CD4-positive, alpha-beta memory T cell (primary cell): ENCODE measurements at regions of chr11 and their contacts with region 1.

Region 1: DNA sequence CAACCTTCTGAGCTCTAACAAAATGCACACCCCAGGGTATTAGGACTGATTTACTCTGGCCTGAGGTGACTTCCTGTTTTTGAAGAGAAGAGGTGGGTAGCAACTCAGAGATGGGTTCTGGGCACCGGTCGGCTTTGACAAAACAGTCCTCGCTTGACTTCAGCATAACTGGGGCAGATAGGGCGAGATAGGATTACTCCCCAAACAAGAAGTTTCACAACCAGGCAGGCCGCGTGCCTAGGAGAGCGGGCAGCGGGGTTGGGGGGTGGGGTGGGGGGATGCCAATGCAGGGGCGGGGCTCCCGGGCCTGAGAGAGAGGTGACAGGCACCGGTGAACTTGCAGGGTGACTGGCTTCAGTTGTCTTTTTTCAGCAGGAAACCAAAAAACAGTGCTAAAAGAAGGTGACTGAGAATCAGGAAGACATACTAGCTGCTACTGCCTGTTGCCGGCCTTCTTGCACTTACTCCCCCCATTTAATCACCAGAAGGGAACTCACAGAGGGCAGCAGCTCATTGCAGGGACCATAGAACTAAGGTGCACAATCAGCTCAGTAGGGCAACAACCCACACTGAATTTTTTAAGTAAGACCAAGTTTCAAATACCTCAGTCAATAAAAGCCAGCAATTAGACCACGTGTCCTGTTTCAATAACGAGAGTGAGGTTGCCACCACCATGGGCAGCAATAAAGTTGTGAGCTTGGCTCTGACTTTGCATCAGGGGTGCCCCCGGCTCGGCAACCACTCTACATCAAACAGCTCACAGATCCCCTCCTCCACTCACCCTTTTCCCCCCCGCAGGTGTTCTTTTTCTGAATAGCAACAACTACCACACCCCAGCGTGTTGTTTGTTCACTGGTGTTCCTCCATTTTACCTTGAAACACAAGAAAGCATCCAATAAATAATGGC is 37.2 kb upstream of the ETS1 start:
- DNase-seq: peak; percentile 69 to 83 (median 77)
- H3K4me3 ChIP-seq: peak overlapping the region in 1 of 2 donors; percentile 28
- H3K4me3 Mint-ChIP-seq: peak overlapping the region; percentile 67 to 91 (median 80)
- H3K27ac ChIP-seq: peak overlapping the region; percentile 67
- H3K27ac Mint-ChIP-seq: peak overlapping the region; percentile 96 to 98 (median 97)
- H3K4me1 ChIP-seq: peaks cover 85% of the 10 kb centered on the region
- H3K4me1 Mint-ChIP-seq: peaks cover 76 to 100% (median 89%) of the 10 kb centered on the region in 4 donors
- H3K27me3 ChIP-seq: no peaks in the 10 kb centered on the region
- H3K27me3 Mint-ChIP-seq: no peaks in the 10 kb centered on the region

Region 2: DNA sequence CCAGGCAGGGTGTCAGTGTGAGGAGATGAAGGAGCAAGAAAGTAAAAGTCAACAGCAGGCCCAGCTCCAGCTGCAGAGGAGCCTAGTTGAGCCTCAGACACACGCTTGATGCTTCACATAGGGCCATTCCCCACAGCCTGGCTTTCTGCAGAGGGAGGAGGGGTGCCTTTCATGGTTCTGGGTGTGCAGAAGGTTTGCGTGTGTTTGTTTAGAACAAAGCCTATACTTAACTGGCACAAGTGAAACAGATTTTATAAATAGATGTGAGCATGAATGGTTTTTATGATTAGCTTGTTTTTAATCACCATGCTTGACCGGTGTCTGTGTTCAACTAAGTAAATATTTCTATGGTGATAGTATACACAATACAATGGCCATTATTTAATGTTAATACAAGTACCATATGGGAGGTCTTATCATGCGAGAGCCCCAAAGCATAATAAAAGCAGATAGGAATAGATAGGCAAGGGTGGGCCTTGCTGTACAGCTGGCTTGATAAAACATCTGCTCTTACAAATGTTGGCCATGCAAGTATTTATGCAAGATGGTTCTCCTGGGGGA is 327.4 kb before region 1 on chr11:
- CTCF ChIA-PET with region 1: interaction called, 173 read pairs
- POLR2A ChIA-PET with region 1: interaction called, 49 read pairs
- intact Hi-C with region 1: no loop called
- DNase-seq: no peak
- H3K4me3 ChIP-seq: no peak overlapping the region
- H3K4me3 Mint-ChIP-seq: peak overlapping the region in 6 of 8 donors; percentile 43 to 93 (median 58)
- H3K27ac ChIP-seq: peak overlapping the region; percentile 1
- H3K27ac Mint-ChIP-seq: peak overlapping the region; percentile 82 to 100 (median 98)
- H3K4me1 ChIP-seq: peaks cover 100% of the 10 kb centered on the region
- H3K4me1 Mint-ChIP-seq: peaks cover 76 to 98% (median 86%) of the 10 kb centered on the region in 4 donors
- H3K27me3 ChIP-seq: no peaks in the 10 kb centered on the region
- H3K27me3 Mint-ChIP-seq: no peaks in the 10 kb centered on the region

Region 3: GRCh38 chr11:128458321-128458720 is 166.2 kb before region 1 on chr11:
- CTCF ChIA-PET with region 1: interaction called, 31 read pairs
- POLR2A ChIA-PET with region 1: interaction called, 18 read pairs
- intact Hi-C with region 1: no loop called
- DNase-seq: no peak
- H3K4me3 ChIP-seq: no peak overlapping the region
- H3K4me3 Mint-ChIP-seq: no peak overlapping the region
- H3K27ac ChIP-seq: no peak overlapping the region
- H3K27ac Mint-ChIP-seq: peak overlapping the region; percentile 5 to 57 (median 23)
- H3K4me1 ChIP-seq: peaks cover 74% of the 10 kb centered on the region
- H3K4me1 Mint-ChIP-seq: peaks cover 57 to 94% (median 76%) of the 10 kb centered on the region in 4 donors
- H3K27me3 ChIP-seq: no peaks in the 10 kb centered on the region
- H3K27me3 Mint-ChIP-seq: no peaks in the 10 kb centered on the region

Region 4: GRCh38 chr11:128472128-128473089 is 152.1 kb before region 1 on chr11:
- CTCF ChIA-PET with region 1: interaction called, 21 read pairs
- POLR2A ChIA-PET with region 1: interaction called, 62 read pairs
- intact Hi-C with region 1: no loop called
- DNase-seq: peak in 4 of 5 donors; percentile 51 to 82 (median 57)
- H3K4me3 ChIP-seq: peak overlapping the region; percentile 5 to 27
- H3K4me3 Mint-ChIP-seq: peak overlapping the region; percentile 70 to 93 (median 84)
- H3K27ac ChIP-seq: peak overlapping the region; percentile 94
- H3K27ac Mint-ChIP-seq: peak overlapping the region; percentile 98 to 99 (median 99)
- H3K4me1 ChIP-seq: peaks cover 100% of the 10 kb centered on the region
- H3K4me1 Mint-ChIP-seq: peaks cover 85 to 98% (median 92%) of the 10 kb centered on the region in 4 donors
- H3K27me3 ChIP-seq: no peaks in the 10 kb centered on the region
- H3K27me3 Mint-ChIP-seq: no peaks in the 10 kb centered on the region

Region 5: DNA sequence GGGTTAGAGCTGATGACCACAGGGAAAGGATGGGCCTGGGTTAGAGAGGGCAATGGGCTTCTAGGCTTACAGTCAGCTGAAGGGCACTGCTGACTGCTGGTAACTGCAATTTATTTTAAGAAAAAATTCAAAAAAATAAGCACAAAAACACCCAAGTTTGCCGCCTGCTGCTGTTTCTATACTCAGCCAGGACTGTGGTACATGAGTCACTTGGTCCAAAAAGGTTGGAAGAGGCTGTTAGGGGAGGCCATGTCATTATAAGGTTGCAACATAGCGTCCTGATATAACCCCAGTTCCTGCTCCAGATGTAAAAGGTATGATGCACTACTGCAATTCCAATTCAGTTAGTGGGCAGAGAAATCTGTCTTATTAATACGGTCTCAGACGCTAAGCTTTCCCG is 136.1 kb before region 1 on chr11:
- CTCF ChIA-PET with region 1: interaction called, 5 read pairs
- POLR2A ChIA-PET with region 1: interaction called, 15 read pairs
- intact Hi-C with region 1: no loop called
- DNase-seq: peak in 1 of 5 donors; percentile 85
- H3K4me3 ChIP-seq: peak overlapping the region in 1 of 2 donors; percentile 11
- H3K4me3 Mint-ChIP-seq: peak overlapping the region; percentile 10 to 81 (median 68)
- H3K27ac ChIP-seq: peak overlapping the region; percentile 89
- H3K27ac Mint-ChIP-seq: peak overlapping the region; percentile 90 to 99 (median 97)
- H3K4me1 ChIP-seq: peaks cover 99% of the 10 kb centered on the region
- H3K4me1 Mint-ChIP-seq: peaks cover 92 to 99% (median 95%) of the 10 kb centered on the region in 4 donors
- H3K27me3 ChIP-seq: no peaks in the 10 kb centered on the region
- H3K27me3 Mint-ChIP-seq: no peaks in the 10 kb centered on the region

Region 6: DNA sequence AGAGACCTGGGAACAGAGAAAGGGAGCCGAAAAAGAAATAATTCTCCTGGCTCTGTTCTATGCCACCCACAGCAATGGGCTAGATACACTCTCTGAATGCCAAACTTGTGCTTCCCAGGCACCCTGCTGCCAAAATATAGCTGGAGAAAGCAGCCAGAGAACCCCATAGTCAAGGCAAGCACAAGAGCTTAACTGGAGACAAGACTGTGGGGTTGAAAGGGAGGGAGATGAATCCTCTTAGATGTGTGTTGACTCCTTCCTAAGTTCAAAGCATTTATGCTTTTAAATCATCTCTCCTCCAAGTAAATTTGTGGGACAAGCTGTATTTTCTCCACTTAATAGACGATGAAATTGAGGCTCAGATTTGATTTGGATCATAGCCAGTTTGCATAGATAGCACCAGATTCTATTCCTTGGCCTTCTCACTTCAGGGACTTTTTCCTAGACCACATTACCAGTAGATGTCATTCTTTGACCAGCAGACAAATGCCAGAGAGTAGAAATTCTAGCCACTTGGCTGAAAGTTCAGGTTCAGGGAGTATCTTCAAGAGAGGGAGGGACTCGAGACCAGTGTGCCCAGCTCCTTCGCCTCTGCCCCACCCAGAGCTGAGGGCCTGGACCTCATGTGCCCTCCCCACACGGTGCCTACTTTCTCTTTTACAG is 20.6 kb before region 1 on chr11:
- CTCF ChIA-PET with region 1: interaction called, 89 read pairs
- POLR2A ChIA-PET with region 1: interaction called, 130 read pairs
- intact Hi-C with region 1: no loop called
- DNase-seq: no peak
- H3K4me3 ChIP-seq: no peak overlapping the region
- H3K4me3 Mint-ChIP-seq: no peak overlapping the region
- H3K27ac ChIP-seq: no peak overlapping the region
- H3K27ac Mint-ChIP-seq: peak overlapping the region in 2 of 7 donors; percentile 34 to 56
- H3K4me1 ChIP-seq: peaks cover 28% of the 10 kb centered on the region
- H3K4me1 Mint-ChIP-seq: peaks cover 10 to 29% (median 18%) of the 10 kb centered on the region in 4 donors
- H3K27me3 ChIP-seq: no peaks in the 10 kb centered on the region
- H3K27me3 Mint-ChIP-seq: no peaks in the 10 kb centered on the region